ENCODE measurements at regions of chr13 and their contacts with region 1.

Region 1: GRCh38 chr13:41916173-41916954 is 44.5 kb downstream of the VWA8 start:
- DNase-seq: peak; percentile 89
- ATAC-seq: peak; percentile 90
- H3K4me3 ChIP-seq: no peak overlapping the region
- H3K27ac ChIP-seq: peak overlapping the region; percentile 82
- H3K4me1 ChIP-seq: peaks cover 41% of the 10 kb centered on the region
- H3K27me3 ChIP-seq: no peaks in the 10 kb centered on the region
- CTCF ChIP-seq: no peak
- EP300 ChIP-seq: peak; percentile 97 to 99
- POLR2A ChIP-seq: no peak
- RAD21 ChIP-seq: no peak

Region 2: DNA sequence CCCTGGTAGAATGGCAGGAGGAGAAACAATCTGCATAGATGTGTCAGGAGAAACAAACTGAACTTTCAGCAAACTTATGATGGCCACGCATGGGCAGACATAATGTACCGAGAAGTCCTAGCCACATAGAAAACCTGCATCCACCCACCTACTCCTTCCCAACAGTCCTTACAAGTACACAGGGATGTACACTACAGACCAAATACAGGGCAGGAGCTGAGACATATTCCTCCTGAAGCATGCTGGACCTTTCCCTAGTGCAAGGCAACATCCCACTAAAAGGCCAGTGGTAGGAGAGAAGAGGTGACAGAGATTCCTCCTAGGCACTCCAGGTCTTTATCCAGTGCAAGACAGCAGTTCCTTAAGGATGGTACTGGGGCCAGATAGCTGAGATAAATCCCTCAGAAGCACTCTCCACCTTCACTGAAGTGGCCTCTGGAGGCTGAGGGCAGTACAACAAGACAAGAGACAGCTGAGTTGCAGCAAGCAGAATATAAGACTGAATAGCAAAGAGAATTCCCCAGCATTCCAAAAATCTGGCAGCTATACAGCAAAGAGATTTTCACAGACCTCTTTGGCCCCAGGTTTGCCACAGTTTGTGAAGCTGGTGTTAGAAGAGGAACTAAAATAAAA is 26.2 kb after region 1 on chr13:
- CTCF ChIA-PET with region 1: interaction called, 11 read pairs
- POLR2A ChIA-PET with region 1: interaction called, 3 read pairs
- RAD21 ChIA-PET with region 1: interaction called, 6 read pairs
- SMC1A ChIA-PET with region 1: interaction called, 16 read pairs
- in situ Hi-C with region 1: no loop called
- intact Hi-C with region 1: no loop called
- DNase-seq: no peak
- ATAC-seq: peak; percentile 93
- H3K4me3 ChIP-seq: no peak overlapping the region
- H3K27ac ChIP-seq: no peak overlapping the region
- H3K4me1 ChIP-seq: no peaks in the 10 kb centered on the region
- H3K27me3 ChIP-seq: no peaks in the 10 kb centered on the region
- CTCF ChIP-seq: peak; percentile 31 to 39 (median 34); a peak in 4 of 6 replicates
- EP300 ChIP-seq: no peak
- POLR2A ChIP-seq: no peak
- RAD21 ChIP-seq: peak; percentile 55

Region 3: DNA sequence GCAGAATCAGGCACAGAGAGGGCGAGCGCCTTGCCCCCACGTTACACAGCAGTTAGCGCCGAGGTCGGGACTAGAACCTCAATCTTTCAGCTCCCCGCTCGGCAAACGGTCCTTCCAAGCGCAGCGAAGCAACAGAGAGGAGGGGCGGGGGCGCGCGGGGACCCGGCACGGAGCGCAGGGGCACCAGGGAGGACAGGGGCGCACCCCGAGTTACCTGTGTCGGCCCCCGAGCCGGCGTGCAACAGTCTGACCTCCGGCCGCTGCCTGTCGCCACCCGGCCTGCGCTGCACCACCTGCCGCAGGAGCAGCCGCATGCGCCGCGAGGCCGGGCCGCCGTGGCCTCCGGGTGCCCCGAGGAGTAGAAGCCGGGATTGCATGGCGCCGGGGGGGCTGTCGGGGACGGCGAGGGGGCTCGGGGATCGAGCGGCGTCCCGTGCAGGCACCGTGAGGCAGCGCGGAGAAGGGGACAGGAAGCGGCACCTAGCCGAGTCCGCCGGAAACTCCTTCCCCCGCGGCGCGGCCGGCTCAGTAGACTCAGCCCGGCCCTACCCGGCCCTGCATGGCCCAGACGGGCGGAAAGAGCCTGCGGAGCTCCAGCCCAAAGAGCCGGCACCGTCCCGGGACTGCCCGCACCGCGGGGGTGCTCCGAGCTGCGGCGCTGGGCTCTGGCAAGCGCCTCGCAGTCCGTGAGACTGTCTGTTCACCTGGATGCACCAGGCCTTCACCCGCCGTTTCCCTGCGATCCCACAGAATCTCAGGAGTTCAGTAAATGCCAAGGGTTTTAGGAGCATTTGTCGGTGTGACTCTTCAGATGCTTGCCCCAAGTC is 44.5 kb after region 1 on chr13 and contains the start of gene VWA8:
- CTCF ChIA-PET with region 1: interaction called, 5 read pairs
- POLR2A ChIA-PET with region 1: interaction called, 8 read pairs
- RAD21 ChIA-PET with region 1: interaction called, 7 read pairs
- SMC1A ChIA-PET with region 1: interaction called, 27 read pairs
- in situ Hi-C with region 1: no loop called
- intact Hi-C with region 1: loop called (anchors 1 kb)
- DNase-seq: no peak
- ATAC-seq: peak; percentile 93
- H3K4me3 ChIP-seq: peak within 1 kb of the TSS; percentile 82
- H3K27ac ChIP-seq: peak within 1 kb of the TSS; percentile 87
- H3K4me1 ChIP-seq: no peaks in the 10 kb centered on the region; the same call in 1 of the 2 replicates
- H3K27me3 ChIP-seq: no peaks in the 10 kb centered on the region
- CTCF ChIP-seq: 0 out of 6 replicates have a peak, but pooled peaks of 1 of the 3 experiments have one; percentile 2
- EP300 ChIP-seq: no peak
- POLR2A ChIP-seq: peak; percentile 85
- RAD21 ChIP-seq: no peak
- polyA plus RNA-seq, gene VWA8: 3.0 to 4.6 TPM

Region 4: GRCh38 chr13:42048682-42049453 is 132.5 kb after region 1 on chr13:
- CTCF ChIA-PET with region 1: no interaction called
- POLR2A ChIA-PET with region 1: interaction called, 3 read pairs
- RAD21 ChIA-PET with region 1: interaction called, 3 read pairs
- SMC1A ChIA-PET with region 1: interaction called, 10 read pairs
- in situ Hi-C with region 1: loop called (anchors 5 kb)
- intact Hi-C with region 1: no loop called
- DNase-seq: no peak
- ATAC-seq: peak; percentile 74
- H3K4me3 ChIP-seq: peak overlapping the region; percentile 85
- H3K27ac ChIP-seq: peak overlapping the region; percentile 54
- H3K4me1 ChIP-seq: no peaks in the 10 kb centered on the region; the same call in 1 of the 2 replicates
- H3K27me3 ChIP-seq: no peaks in the 10 kb centered on the region
- CTCF ChIP-seq: peak in 2 of 3 experiments; percentile 3 to 28; a peak in 3 of 6 replicates
- EP300 ChIP-seq: no peak
- POLR2A ChIP-seq: peak; percentile 63
- RAD21 ChIP-seq: no peak

Measured in GM12878 (cell line).